OCI-LY7 (cell line): ENCODE measurements at regions of chr3 and their contacts with region 1.

Region 1: GRCh38 chr3:153628591-153628990 is 466.6 kb downstream of the RAP2B start:
- DNase-seq: peak; percentile 51
- H3K4me3 ChIP-seq: peak overlapping the region; percentile 60
- H3K27ac ChIP-seq: peak overlapping the region; percentile 85
- H3K4me1 ChIP-seq: peaks cover 98% of the 10 kb centered on the region
- CTCF ChIP-seq: no peak

Region 2: DNA sequence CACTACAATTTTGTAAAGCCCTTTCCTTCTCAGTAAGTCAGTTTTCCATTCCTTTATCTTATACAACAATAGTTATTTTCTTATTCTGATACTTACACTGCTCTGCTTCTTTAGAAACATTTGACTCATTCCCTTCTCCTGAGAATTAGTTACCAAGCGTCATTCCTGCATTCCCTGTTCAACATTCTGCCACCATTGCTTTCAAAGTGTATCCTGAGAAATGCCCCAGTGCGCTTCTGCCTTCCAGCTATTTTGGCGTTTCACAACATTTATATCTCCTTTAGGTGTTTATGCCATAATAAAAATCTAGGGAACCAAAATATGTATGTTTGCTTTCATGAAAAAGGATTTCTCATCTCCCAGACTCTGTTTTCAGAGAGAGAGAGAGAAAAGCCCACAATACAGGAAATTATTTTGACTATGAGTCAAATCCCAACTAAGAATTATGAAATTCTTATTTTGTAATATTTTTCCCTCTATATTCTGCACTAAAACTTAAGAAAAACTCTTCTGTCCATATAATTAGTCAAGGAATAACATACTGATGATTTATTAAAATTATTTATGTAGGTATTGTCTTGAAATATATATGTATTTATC is 584.8 kb before region 1 on chr3:
- CTCF ChIA-PET with region 1: no interaction called
- POLR2A ChIA-PET with region 1: no interaction called
- intact Hi-C with region 1: no loop called
- DNase-seq: no peak
- H3K4me3 ChIP-seq: no peak overlapping the region
- H3K27ac ChIP-seq: no peak overlapping the region
- H3K4me1 ChIP-seq: no peaks in the 10 kb centered on the region
- CTCF ChIP-seq: no peak

Region 3: DNA sequence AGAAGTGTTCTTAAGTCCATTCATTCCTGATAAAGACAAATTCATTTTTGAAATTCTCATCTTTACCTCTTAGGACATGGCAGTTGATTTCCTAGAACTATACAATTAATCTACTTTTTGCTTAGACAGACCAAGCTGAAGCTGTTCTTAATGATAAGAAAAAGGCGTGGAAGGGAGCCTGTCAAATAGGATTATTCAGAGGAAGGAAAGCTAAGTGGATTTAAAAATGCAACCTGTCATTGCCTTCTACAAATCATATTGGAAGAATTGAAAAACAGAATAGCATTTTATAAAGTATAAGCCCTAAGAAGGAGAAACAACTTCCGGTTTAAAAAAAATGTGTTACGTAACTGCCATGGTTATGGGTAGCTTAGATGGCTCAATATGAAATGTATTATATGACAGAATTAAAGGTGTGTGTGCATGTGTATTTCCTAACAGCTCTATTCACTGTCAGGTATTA is 547.8 kb before region 1 on chr3:
- CTCF ChIA-PET with region 1: no interaction called
- POLR2A ChIA-PET with region 1: no interaction called
- intact Hi-C with region 1: no loop called
- DNase-seq: no peak
- H3K4me3 ChIP-seq: no peak overlapping the region
- H3K27ac ChIP-seq: no peak overlapping the region
- H3K4me1 ChIP-seq: no peaks in the 10 kb centered on the region
- CTCF ChIP-seq: no peak

Region 4: GRCh38 chr3:153640689-153641301 is 12.2 kb after region 1 on chr3:
- CTCF ChIA-PET with region 1: interaction called, 3 read pairs
- POLR2A ChIA-PET with region 1: interaction called, 15 read pairs
- intact Hi-C with region 1: no loop called
- DNase-seq: no peak
- H3K4me3 ChIP-seq: no peak overlapping the region
- H3K27ac ChIP-seq: no peak overlapping the region
- H3K4me1 ChIP-seq: no peaks in the 10 kb centered on the region
- CTCF ChIP-seq: no peak